ENCODE measurements at regions of chr2 and their contacts with region 1.

Region 1: GRCh38 chr2:9261231-9261883 is 54.7 kb downstream of the ASAP2 start:
- DNase-seq: peak in 4 of 5 donors; percentile 44 to 66 (median 53)
- ATAC-seq: peak in 2 of 4 donors; percentile 23 to 30
- H3K4me3 ChIP-seq: no peak overlapping the region
- H3K27ac ChIP-seq: peak overlapping the region; percentile 53 to 94 (median 84)
- H3K4me1 ChIP-seq: peaks cover 33 to 98% (median 84%) of the 10 kb centered on the region in 12 donors
- H3K27me3 ChIP-seq: no peaks in the 10 kb centered on the region
- CTCF ChIP-seq: peak in 1 of 12 donors; percentile 13
- POLR2A ChIP-seq: no peak

Region 2: GRCh38 chr2:9212661-9213411 is 48.5 kb before region 1 on chr2:
- intact Hi-C with region 1: loop called in 8 of 10 experiments (anchors 5 kb)
- DNase-seq: no peak
- ATAC-seq: peak in 3 of 4 donors; percentile 30 to 52 (median 36)
- H3K4me3 ChIP-seq: peak overlapping the region in 2 of 12 donors; percentile 8
- H3K27ac ChIP-seq: peak overlapping the region; percentile 31 to 80 (median 64)
- H3K4me1 ChIP-seq: peaks cover 0 to 79% (median 47%) of the 10 kb centered on the region in 12 donors
- H3K27me3 ChIP-seq: peaks cover 0 to 2% (median 0%) of the 10 kb centered on the region in 9 donors
- CTCF ChIP-seq: no peak
- POLR2A ChIP-seq: no peak

Region 3: DNA sequence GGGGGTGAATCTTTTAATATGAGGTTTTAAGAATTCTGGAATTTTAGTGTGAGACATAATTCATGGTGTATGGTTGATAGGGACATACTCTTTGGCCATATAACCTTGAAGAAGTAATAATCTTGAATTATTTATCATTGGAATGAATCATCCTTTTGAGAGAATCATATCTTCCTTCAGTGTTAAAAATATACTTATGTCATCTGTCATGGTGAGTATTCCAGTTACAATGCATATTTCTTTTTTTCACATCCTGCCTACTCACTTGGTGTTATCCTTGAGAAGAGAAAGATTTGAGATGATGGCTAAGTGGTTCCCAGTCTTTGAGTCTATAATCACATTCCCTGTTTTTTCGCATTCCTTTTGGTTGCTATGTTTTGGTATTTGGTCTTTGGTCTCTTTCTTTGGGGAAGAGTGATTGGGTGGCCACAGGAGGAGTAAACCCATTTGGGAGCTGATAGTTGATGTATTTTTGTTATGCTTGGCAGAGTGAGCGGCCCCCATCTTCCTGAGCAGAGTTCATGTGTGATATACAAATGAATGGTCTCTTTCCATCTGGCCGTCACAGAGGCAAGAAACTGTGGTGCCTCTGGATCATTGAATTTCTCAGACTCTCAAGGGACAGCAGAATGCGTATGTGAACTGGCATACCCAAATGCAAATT is 33.1 kb before region 1 on chr2:
- intact Hi-C with region 1: loop called in 2 of 10 experiments (anchors 5 kb)
- DNase-seq: no peak
- ATAC-seq: peak in 1 of 4 donors; percentile 17
- H3K4me3 ChIP-seq: no peak overlapping the region
- H3K27ac ChIP-seq: peak overlapping the region in 10 of 12 donors; percentile 2 to 76 (median 56)
- H3K4me1 ChIP-seq: peaks cover 33 to 100% (median 86%) of the 10 kb centered on the region in 12 donors
- H3K27me3 ChIP-seq: peaks cover 0 to 3% (median 0%) of the 10 kb centered on the region in 9 donors
- CTCF ChIP-seq: no peak
- POLR2A ChIP-seq: no peak

Region 4: DNA sequence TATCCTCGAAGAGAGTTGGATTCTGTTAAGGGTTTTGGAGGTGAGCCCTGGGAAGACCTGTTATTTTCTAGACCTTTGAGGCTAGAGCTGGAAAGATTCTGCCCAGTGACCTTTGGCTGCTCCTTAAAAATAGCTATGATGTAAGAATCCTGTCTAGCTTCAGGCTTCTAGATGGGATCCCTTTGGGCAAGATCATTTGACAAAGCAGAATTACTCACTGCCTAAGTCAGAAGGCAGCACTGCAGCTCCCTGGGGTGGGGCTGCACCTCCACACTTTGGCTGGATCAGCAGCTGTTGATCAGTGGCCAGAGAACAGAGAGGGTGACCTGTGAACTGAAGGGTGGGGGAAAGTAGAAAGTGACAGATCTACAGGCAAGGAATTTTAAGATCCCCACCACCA is 49.0 kb after region 1 on chr2:
- intact Hi-C with region 1: loop called in 3 of 10 experiments (anchors 5 to 10 kb)
- DNase-seq: peak; percentile 60 to 84 (median 71)
- ATAC-seq: peak; percentile 73 to 94 (median 91)
- H3K4me3 ChIP-seq: no peak overlapping the region
- H3K27ac ChIP-seq: peak overlapping the region; percentile 35 to 88 (median 80)
- H3K4me1 ChIP-seq: peaks cover 9 to 52% (median 41%) of the 10 kb centered on the region in 12 donors
- H3K27me3 ChIP-seq: no peaks in the 10 kb centered on the region
- CTCF ChIP-seq: no peak
- POLR2A ChIP-seq: no peak

Region 5: DNA sequence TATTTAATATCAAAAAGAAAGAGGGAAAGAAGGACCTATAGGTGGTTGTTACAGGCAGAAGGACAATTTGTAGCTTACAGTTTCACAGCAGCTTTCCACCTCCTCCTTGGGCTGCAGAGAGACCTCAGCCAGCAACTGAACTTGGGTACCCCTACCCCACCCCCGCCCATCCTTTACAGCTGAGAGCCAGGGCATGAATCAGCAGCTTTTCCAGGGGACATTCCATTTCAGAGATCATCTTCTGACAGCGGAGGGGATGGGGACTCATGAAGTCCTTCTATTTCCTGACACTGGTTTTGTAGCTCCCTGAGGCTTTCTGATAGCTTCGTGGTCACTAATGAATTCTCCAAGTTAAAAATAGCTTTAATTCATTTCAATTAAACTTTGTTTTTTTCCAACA is 65.6 kb after region 1 on chr2:
- intact Hi-C with region 1: loop called in 2 of 10 experiments (anchors 5 to 10 kb)
- DNase-seq: no peak
- ATAC-seq: no peak
- H3K4me3 ChIP-seq: no peak overlapping the region
- H3K27ac ChIP-seq: peak overlapping the region in 2 of 12 donors; percentile 12 to 26
- H3K4me1 ChIP-seq: peaks cover 0 to 53% (median 29%) of the 10 kb centered on the region in 12 donors
- H3K27me3 ChIP-seq: no peaks in the 10 kb centered on the region
- CTCF ChIP-seq: no peak
- POLR2A ChIP-seq: no peak